HAP-1 (cell line): ENCODE measurements at regions of chr6 and their contacts with region 1.

Region 1: GRCh38 chr6:25278914-25279747 is at the start of gene CARMIL1:
- DNase-seq: peak; percentile 75 to 93
- H3K4me3 ChIP-seq: peak within 1 kb of the TSS; percentile 59
- H3K4me1 ChIP-seq: peaks cover 14% of the 10 kb centered on the region
- H3K27me3 ChIP-seq: no peaks in the 10 kb centered on the region

Region 2: GRCh38 chr6:24484657-24485323 is 794.3 kb before region 1 on chr6:
- in situ Hi-C with region 1: no loop called
- DNase-seq: no peak
- H3K4me3 ChIP-seq: no peak overlapping the region
- H3K4me1 ChIP-seq: no peaks in the 10 kb centered on the region
- H3K27me3 ChIP-seq: no peaks in the 10 kb centered on the region

Region 3: DNA sequence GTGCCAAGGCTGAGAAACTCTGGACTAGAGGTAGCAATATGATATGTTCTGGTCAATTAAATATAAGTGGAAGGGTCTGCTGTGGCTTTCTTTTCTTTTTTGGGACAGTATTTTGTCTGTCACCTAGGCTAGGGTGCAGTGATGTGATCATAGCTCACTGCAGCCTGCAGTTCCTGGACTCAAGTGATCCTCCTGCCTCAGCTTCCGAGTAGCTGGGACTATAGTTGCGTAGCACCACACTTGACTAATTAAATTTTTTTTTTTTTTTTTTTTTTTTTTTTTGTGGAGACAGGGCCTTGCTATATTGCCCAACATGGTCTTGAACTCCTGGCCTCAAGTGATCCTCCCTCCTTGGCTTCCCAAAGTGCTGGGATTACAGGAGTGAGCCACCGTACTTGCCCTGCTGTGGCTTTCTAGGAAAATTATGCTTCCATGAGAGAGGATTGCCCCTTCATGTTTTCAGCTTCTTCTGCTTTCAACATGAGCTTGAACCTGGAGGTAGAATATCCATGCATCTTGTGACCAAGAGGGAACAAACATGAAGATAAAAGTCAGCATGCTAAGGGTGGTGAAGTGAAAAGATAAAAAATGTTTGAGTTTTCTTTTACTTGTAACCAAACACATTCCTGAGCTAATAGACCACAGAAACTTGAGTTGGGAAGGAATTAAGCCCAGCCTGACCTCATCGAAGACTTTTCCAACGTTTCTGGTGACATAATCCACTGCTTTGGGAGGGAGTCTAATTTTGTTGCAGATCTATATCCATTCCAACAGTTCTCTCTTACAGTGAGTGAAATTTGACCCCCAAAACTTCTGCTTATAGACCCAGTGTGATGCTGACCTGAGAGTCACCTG is 75.2 kb after region 1 on chr6:
- in situ Hi-C with region 1: no loop called
- DNase-seq: no peak
- H3K4me3 ChIP-seq: no peak overlapping the region
- H3K4me1 ChIP-seq: peaks cover 2% of the 10 kb centered on the region
- H3K27me3 ChIP-seq: no peaks in the 10 kb centered on the region

Region 4: DNA sequence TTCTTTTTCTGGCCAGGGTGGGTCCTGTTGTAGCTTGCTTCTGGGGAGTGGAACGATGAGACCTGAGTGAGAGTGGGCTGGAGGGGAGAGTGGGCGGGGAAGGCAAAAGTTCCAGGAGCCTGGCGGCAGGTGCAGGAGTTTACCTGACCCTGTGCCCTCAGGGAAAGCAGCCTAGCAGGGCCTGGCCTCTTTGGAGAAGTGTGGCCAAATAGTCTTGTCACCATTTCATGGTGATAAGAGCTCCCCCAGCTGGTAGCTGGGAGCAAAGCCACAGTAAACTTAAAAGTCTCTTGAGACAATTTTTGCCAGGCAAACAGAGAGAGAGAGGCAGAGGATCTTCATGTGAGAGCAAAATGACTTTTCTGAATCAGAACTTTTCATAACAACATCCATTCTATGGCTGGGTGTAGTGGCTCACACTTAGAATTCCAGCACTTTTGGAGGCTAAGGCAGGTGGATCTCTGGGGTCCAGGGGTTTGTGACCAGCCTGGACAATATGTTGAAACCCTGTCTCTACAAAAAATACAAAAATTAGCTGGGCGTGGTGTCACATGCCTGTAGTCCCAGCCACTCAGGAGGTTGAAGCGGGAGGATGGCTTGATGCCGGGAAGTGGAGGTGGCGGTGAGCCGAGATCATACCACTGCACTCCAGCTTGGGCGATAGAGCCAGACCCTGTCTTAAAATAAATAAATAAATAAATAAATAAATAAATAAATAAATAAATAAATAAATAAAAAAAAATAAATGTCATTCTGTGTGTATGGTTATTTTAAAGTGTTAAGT is 211.1 kb after region 1 on chr6:
- in situ Hi-C with region 1: loop called (anchors 10 kb)
- DNase-seq: peak; percentile 74 to 79
- H3K4me3 ChIP-seq: no peak overlapping the region
- H3K4me1 ChIP-seq: no peaks in the 10 kb centered on the region
- H3K27me3 ChIP-seq: no peaks in the 10 kb centered on the region